CD8-positive, alpha-beta T cell (primary cell): ENCODE measurements at regions of chr14 and their contacts with region 1.

Region 1: DNA sequence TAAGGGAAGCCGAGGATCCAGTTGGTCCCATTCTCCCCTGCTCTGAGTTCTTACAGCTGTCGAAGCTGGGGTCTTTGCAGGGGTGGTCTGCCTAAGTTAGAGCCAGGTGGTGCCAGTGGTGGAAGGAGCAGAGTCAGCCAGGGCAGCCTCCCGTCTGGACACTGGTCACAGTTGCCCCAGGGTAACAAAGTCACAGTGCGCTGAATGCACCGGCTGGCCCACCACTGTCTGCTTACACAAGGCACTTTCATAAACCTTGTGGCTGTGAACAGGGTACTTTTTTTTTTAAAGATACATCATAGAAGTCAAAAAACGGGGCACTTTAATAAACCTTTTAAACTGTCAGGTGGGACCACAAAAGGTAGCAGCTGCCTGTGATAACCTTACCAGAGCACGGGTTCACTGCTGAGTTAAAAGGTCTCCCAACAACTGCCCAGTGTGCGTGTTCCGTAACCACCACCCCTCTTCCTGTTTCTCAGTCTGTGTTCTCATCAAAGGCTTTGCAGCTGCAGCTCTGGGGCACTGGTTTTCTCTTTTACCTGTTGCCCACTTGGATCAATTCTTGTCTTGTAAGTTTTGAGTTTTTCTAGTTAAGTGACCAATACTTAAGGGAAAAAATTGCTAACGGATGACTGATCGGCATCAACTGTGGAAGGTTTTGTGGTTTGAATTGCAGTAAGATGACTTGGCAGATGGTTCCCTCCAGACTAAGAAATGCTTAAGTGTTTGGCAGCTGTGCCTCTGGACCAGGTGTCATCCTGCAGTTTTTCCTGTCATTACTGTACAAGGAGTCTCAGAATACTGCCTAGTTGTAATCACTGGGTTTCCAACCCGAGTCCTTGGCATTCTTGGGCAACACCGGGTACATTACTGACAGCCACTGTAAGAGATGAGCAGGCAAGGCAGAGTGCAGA is 55.9 kb downstream of the DYNC1H1 start:
- DNase-seq: peak; percentile 6 to 80 (median 35)
- ATAC-seq: peak; percentile 90
- H3K4me3 ChIP-seq: no peak overlapping the region
- H3K4me3 Mint-ChIP-seq: peak overlapping the region; percentile 64
- H3K27ac ChIP-seq: peak overlapping the region in 1 of 2 experiments; percentile 54
- H3K27ac Mint-ChIP-seq: peak overlapping the region; percentile 90
- H3K4me1 ChIP-seq: peaks cover 24% of the 10 kb centered on the region
- H3K4me1 Mint-ChIP-seq: peaks cover 19% of the 10 kb centered on the region
- H3K27me3 ChIP-seq: no peaks in the 10 kb centered on the region
- H3K27me3 Mint-ChIP-seq: no peaks in the 10 kb centered on the region
- CTCF ChIP-seq: no peak

Region 2: GRCh38 chr14:102055216-102055918 is 35.1 kb after region 1 on chr14:
- CTCF ChIA-PET with region 1: no interaction called
- POLR2A ChIA-PET with region 1: no interaction called
- intact Hi-C with region 1: no loop called
- DNase-seq: no peak
- ATAC-seq: no peak
- H3K4me3 ChIP-seq: no peak overlapping the region
- H3K4me3 Mint-ChIP-seq: no peak overlapping the region
- H3K27ac ChIP-seq: no peak overlapping the region
- H3K27ac Mint-ChIP-seq: peak overlapping the region; percentile 37
- H3K4me1 ChIP-seq: no peaks in the 10 kb centered on the region
- H3K4me1 Mint-ChIP-seq: peaks cover 26% of the 10 kb centered on the region
- H3K27me3 ChIP-seq: no peaks in the 10 kb centered on the region
- H3K27me3 Mint-ChIP-seq: no peaks in the 10 kb centered on the region
- CTCF ChIP-seq: no peak

Region 3: GRCh38 chr14:102077382-102077709 is 57.0 kb after region 1 on chr14:
- CTCF ChIA-PET with region 1: no interaction called
- POLR2A ChIA-PET with region 1: no interaction called
- intact Hi-C with region 1: loop called (anchors 5 kb)
- DNase-seq: no peak
- ATAC-seq: no peak
- H3K4me3 ChIP-seq: no peak overlapping the region
- H3K4me3 Mint-ChIP-seq: no peak overlapping the region
- H3K27ac ChIP-seq: no peak overlapping the region
- H3K27ac Mint-ChIP-seq: no peak overlapping the region
- H3K4me1 ChIP-seq: peaks cover 8% of the 10 kb centered on the region
- H3K4me1 Mint-ChIP-seq: peaks cover 25% of the 10 kb centered on the region
- H3K27me3 ChIP-seq: no peaks in the 10 kb centered on the region
- H3K27me3 Mint-ChIP-seq: no peaks in the 10 kb centered on the region
- CTCF ChIP-seq: no peak